ENCODE measurements at regions of chr2 and their contacts with region 1.

Region 1: DNA sequence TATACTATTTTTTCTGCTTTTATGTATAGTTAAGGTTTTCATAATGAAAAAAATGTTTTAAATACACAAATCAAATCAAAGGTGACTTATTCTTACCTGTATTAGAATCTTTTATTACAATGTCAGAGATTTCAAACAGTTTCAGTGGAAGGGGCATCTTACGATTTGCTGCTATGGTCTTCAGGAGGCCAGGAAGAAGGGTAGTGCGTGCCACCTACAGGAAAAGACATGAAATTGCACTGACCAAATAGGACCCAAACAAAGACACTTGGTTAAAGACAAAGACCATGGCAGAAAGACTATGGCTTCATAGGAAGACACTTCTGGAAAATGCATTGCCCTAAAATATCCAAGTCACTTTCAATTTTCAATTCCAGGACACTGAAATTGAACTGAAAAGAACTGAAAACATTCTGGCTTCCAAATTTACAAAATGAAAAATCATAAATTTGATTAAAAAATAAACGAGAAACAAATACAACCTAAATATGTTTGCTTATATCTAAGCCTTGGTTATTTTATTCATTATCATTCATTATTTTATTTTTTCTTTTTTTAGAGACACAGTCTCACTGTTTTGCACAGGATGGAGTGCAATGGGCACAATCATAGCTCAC is 42.1 kb downstream of the FARSB start:
- DNase-seq: no peak
- ATAC-seq: peak; percentile 47 to 68
- H3K4me3 ChIP-seq: no peak overlapping the region
- H3K27ac ChIP-seq: no peak overlapping the region
- H3K4me1 ChIP-seq: no peaks in the 10 kb centered on the region
- H3K27me3 ChIP-seq: no peaks in the 10 kb centered on the region

Region 2: DNA sequence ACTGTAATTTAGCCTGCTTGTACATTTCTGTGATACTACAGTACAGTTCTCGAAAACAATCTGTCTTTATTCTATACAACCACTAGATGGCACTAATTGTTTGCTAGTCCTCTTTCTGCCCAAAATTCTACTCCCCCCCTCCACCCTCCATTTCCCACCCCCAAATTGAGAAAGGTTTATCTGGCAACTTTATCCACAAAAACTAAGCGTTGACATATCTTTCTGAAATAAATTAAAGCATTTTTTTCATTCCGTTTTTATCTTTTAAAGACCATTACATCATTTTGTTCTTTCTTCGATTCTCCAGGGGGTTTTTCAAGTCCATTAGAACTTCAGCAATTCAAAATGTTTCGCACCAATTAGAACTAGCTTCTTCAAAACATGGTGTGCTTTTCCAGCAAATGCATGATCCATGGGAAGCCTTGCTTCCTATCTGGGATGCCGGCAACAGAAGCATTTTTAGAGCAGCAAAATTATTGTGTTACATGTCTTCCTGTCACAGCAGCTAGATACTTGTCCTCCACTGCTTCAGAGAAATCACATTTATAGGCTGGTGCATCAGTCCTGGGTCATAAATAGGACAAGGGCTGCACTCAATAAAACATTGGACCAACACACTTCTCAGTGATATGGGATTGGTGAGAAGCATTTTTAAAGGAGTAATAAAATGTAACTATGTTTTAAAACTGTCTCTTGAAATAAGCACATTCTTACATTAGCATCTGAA is 556.3 kb before region 1 on chr2:
- intact Hi-C with region 1: loop called in 2 of 4 experiments (anchors 5 to 10 kb)
- DNase-seq: no peak
- ATAC-seq: peak; percentile 76 to 79
- H3K4me3 ChIP-seq: no peak overlapping the region
- H3K27ac ChIP-seq: no peak overlapping the region
- H3K4me1 ChIP-seq: no peaks in the 10 kb centered on the region
- H3K27me3 ChIP-seq: no peaks in the 10 kb centered on the region

Region 3: DNA sequence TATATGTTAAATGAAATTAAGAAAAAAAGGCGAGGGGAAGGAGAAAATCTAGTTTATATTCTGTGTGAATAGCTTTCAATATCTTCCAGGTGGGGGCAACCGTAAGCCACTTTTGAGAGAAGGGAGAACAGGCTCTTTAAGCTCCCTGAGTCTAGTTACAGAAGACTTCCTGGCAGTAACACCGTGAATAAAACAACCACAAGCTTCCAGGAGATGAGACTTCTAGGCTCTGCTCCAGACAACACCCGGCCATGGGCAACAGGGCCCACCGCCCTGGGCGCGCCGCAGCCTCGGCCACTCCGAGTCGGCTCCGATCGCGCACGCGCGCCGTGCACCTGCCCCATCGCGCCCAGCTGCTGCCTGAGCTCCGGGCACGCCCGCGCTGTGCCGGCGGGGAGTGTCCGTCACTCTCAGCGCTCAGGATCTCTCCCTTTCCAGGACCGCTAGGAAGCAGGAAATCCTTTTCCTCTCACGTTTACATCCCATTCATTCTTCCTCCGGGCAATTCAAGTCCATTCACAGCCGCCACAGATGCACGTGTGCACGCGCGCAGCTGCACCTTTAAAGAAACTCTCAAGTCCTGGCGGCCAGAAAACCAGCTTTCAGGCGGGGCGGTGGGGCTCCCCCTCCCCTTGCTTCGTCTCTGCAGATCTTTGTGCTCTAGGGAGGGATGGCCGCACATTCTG is 295.7 kb before region 1 on chr2:
- intact Hi-C with region 1: loop called in 3 of 4 experiments (anchors 5 to 10 kb)
- DNase-seq: peak in 1 of 3 donors; percentile 75
- ATAC-seq: peak; percentile 72 to 81
- H3K4me3 ChIP-seq: peak overlapping the region; percentile 68
- H3K27ac ChIP-seq: no peak overlapping the region
- H3K4me1 ChIP-seq: no peaks in the 10 kb centered on the region
- H3K27me3 ChIP-seq: peaks cover under 1% of the 10 kb centered on the region